Motor neuron (in vitro differentiated cells): ENCODE measurements at regions of chr9 and their contacts with region 1.

Region 1: GRCh38 chr9:36632892-36633291 is 60.2 kb downstream of the MELK start:
- ATAC-seq: peak in 5 of 8 experiments; percentile 39 to 67 (median 54)
- H3K4me3 ChIP-seq: no peak overlapping the region
- H3K27ac ChIP-seq: no peak overlapping the region
- H3K4me1 ChIP-seq: no peaks in the 10 kb centered on the region

Region 2: DNA sequence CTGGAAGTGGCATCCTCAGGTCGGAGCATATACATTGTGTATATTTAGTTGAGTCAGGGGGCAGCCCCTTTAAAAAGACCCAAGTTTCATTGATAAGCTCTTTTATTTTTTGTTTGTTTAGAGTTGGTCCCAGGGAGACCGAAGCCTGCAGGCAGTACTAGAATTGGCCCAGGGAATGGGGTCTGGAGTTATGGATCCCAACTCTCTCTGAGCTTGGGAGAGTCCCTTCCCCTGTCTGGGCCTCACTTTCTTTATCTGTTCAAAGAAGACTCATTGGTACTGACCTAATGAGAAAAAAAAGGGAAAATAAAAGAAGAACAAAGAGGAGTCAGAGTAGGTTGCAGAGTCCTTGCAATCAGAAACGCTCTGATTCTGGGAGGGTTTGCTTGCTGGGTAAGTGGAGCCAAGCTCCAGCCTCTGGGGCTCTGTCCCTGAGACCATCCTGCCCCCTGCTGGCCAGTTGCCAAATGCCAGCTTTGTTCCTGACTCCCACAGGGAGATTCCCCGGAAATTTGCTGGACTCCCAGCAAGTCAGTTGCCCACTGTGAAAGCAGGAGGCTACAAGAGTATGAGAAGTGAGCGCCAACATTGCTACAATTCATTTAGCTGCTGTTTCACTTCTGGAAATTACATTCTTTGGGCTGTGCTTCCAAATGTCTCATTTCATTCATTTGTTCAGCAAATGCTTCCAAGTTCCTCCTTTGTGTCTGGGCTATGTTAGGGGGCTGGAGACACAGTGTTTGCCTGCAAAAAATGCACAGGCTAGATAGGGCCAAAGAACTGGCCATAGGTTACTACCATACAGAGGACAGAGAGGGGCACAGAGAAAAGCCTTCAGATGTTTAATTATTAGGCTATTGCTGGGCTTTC is 96.0 kb after region 1 on chr9:
- in situ Hi-C with region 1: loop called in 1 of 9 experiments (anchors 10 kb)
- ATAC-seq: peak; percentile 78 to 96 (median 93)
- H3K4me3 ChIP-seq: no peak overlapping the region
- H3K27ac ChIP-seq: no peak overlapping the region
- H3K4me1 ChIP-seq: peaks cover 0 to 4% of the 10 kb centered on the region in 2 donors